Panc1 (cell line): ENCODE measurements at regions of chr2 and their contacts with region 1.

Region 1: DNA sequence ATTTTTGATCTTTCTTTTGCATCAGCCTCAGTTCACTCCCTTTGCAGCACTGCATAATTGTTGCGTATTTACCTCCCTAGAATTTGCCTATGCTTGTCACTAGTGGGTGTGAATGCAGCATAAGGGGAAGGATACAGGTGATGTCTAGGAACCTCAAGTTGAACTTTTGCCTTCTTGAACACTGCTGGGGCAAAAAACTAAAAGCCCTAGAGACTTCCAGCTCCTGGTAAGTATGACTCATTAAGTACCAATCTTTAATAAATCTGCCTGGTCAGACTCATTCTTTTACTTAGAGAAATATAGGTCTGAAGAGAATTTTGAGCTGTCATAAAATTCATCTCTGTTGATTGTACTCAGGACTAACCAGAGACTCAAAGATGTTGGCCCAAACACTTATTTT is 547.3 kb upstream of the FANCL start:
- DNase-seq: no peak
- ATAC-seq: no peak
- H3K4me3 ChIP-seq: no peak overlapping the region
- H3K27ac ChIP-seq: no peak overlapping the region
- H3K4me1 ChIP-seq: no peaks in the 10 kb centered on the region
- H3K27me3 ChIP-seq: no peaks in the 10 kb centered on the region
- CTCF ChIP-seq: no peak

Region 2: DNA sequence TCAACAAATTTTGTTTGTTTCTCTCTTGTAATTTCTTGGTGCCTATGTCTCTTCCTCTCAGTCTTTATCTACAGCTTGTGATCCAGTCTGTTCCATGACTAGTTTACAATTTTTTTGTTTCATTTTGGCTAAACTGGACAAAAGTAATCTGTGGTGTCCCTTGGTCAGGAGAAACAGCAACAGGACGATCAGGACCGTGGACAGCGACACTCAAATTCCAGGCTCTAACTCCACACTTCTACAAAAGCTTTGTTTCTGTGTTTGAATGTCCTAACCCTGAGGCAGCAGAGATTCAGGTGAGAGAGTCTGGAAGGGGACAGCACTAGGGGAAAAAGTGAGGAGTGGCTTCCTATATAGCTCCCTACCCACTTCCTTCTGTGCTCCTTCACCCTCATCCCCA is 46.0 kb after region 1 on chr2:
- CTCF ChIA-PET with region 1: no interaction called
- POLR2A ChIA-PET with region 1: no interaction called
- in situ Hi-C with region 1: no loop called
- intact Hi-C with region 1: loop called (anchors 2 kb)
- DNase-seq: no peak
- ATAC-seq: no peak
- H3K4me3 ChIP-seq: no peak overlapping the region
- H3K27ac ChIP-seq: no peak overlapping the region
- H3K4me1 ChIP-seq: no peaks in the 10 kb centered on the region
- H3K27me3 ChIP-seq: no peaks in the 10 kb centered on the region
- CTCF ChIP-seq: no peak

Region 3: GRCh38 chr2:58866040-58866439 is 77.6 kb after region 1 on chr2:
- CTCF ChIA-PET with region 1: no interaction called
- POLR2A ChIA-PET with region 1: no interaction called
- in situ Hi-C with region 1: no loop called
- intact Hi-C with region 1: no loop called
- DNase-seq: no peak
- ATAC-seq: no peak
- H3K4me3 ChIP-seq: no peak overlapping the region
- H3K27ac ChIP-seq: no peak overlapping the region
- H3K4me1 ChIP-seq: no peaks in the 10 kb centered on the region
- H3K27me3 ChIP-seq: no peaks in the 10 kb centered on the region
- CTCF ChIP-seq: no peak

Region 4: GRCh38 chr2:58916063-58916462 is 127.7 kb after region 1 on chr2:
- CTCF ChIA-PET with region 1: no interaction called
- POLR2A ChIA-PET with region 1: no interaction called
- in situ Hi-C with region 1: no loop called
- intact Hi-C with region 1: no loop called
- DNase-seq: no peak
- ATAC-seq: no peak
- H3K4me3 ChIP-seq: no peak overlapping the region
- H3K27ac ChIP-seq: no peak overlapping the region
- H3K4me1 ChIP-seq: no peaks in the 10 kb centered on the region
- H3K27me3 ChIP-seq: no peaks in the 10 kb centered on the region
- CTCF ChIP-seq: no peak